ENCODE measurements at regions of chr2 and their contacts with region 1.

Region 1: GRCh38 chr2:75710577-75711253 is at the start of gene GCFC2:
- DNase-seq: peak; percentile 88 to 92
- H3K4me3 ChIP-seq: peak within 1 kb of the TSS; percentile 61 to 68
- H3K27ac ChIP-seq: peak within 1 kb of the TSS; percentile 83 to 89
- H3K4me1 ChIP-seq: peaks cover 0 to 31% (median 8%) of the 10 kb centered on the region in 4 donors
- H3K27me3 ChIP-seq: no peaks in the 10 kb centered on the region
- CTCF ChIP-seq: peak; percentile 30 to 35

Region 2: GRCh38 chr2:74894272-74894981 is 816.3 kb before region 1 on chr2:
- intact Hi-C with region 1: no loop called
- DNase-seq: no peak
- H3K4me3 ChIP-seq: no peak overlapping the region
- H3K27ac ChIP-seq: peak overlapping the region; percentile 39 to 65
- H3K4me1 ChIP-seq: peaks cover 0 to 31% (median 9%) of the 10 kb centered on the region in 4 donors
- H3K27me3 ChIP-seq: no peaks in the 10 kb centered on the region
- CTCF ChIP-seq: no peak

Region 3: GRCh38 chr2:75646583-75647425 is 63.9 kb before region 1 on chr2 and contains the start of gene MRPL19:
- intact Hi-C with region 1: loop called (anchors 10 kb)
- DNase-seq: peak; percentile 88
- H3K4me3 ChIP-seq: peak within 1 kb of the TSS; percentile 79 to 96
- H3K27ac ChIP-seq: peak within 1 kb of the TSS; percentile 66 to 81
- H3K4me1 ChIP-seq: peaks cover 0 to 22% (median 5%) of the 10 kb centered on the region in 4 donors
- H3K27me3 ChIP-seq: no peaks in the 10 kb centered on the region
- CTCF ChIP-seq: no peak

Region 4: GRCh38 chr2:75751360-75751759 is 40.6 kb after region 1 on chr2:
- intact Hi-C with region 1: no loop called
- DNase-seq: no peak
- H3K4me3 ChIP-seq: no peak overlapping the region
- H3K27ac ChIP-seq: no peak overlapping the region
- H3K4me1 ChIP-seq: no peaks in the 10 kb centered on the region
- H3K27me3 ChIP-seq: no peaks in the 10 kb centered on the region
- CTCF ChIP-seq: no peak